Activated T-helper 2 cell treated with anti-CD3 and anti-CD28 coated beads, Interferon-gamma antibody, Interleukin-2, Interleukin-4, amounts not matched to agents 10 μg/mL and 5 μg/mL and 100 μg/mL, durations not matched to agents 14 hours and 24 hours and 36 hours (primary cell): ENCODE measurements at regions of chr1 and their contacts with region 1.

Region 1: GRCh38 chr1:40691538-40692428 is at the start of gene NFYC:
- DNase-seq: peak; percentile 96
- H3K4me3 Mint-ChIP-seq: peak within 1 kb of the TSS; percentile 89
- H3K27ac Mint-ChIP-seq: peak within 1 kb of the TSS; percentile 97
- H3K4me1 Mint-ChIP-seq: peaks cover 54% of the 10 kb centered on the region
- H3K27me3 Mint-ChIP-seq: no peaks in the 10 kb centered on the region
- total RNA-seq, gene NFYC: 66.0 and 68.4 TPM in 2 replicates

Region 2: GRCh38 chr1:40241362-40241761 is 450.4 kb before region 1 on chr1:
- intact Hi-C with region 1: loop called (anchors 10 kb)
- DNase-seq: no peak
- H3K4me3 Mint-ChIP-seq: peak overlapping the region; percentile 59
- H3K27ac Mint-ChIP-seq: peak overlapping the region; percentile 83
- H3K4me1 Mint-ChIP-seq: peaks cover 59% of the 10 kb centered on the region
- H3K27me3 Mint-ChIP-seq: no peaks in the 10 kb centered on the region

Region 3: DNA sequence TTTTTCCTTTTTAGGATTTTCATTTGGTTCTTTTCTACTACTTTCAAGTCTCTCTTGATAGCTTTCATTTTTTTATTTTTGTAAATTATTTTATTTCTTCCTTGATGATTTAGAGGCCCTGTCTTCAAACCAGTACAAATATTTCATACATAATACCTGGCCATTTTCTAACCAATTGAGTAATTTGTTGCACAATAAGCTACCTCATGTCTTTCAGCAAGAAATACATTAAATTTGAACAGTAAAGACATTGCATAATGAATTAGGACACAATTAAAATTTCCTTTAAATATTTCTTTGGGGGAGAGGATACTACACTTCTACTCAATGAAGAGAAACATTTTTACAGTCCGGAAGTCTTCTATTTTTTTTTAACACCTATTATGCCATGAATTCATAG is 359.1 kb before region 1 on chr1:
- intact Hi-C with region 1: no loop called
- DNase-seq: no peak
- H3K4me3 Mint-ChIP-seq: no peak overlapping the region
- H3K27ac Mint-ChIP-seq: no peak overlapping the region
- H3K4me1 Mint-ChIP-seq: no peaks in the 10 kb centered on the region
- H3K27me3 Mint-ChIP-seq: peaks cover 7% of the 10 kb centered on the region

Region 4: GRCh38 chr1:40449684-40450494 is 241.9 kb before region 1 on chr1 and contains the start of gene ZFP69B:
- intact Hi-C with region 1: loop called (anchors 1 kb)
- DNase-seq: peak; percentile 86
- H3K4me3 Mint-ChIP-seq: peak within 1 kb of the TSS; percentile 82
- H3K27ac Mint-ChIP-seq: peak within 1 kb of the TSS; percentile 86
- H3K4me1 Mint-ChIP-seq: peaks cover 28% of the 10 kb centered on the region
- H3K27me3 Mint-ChIP-seq: no peaks in the 10 kb centered on the region
- total RNA-seq, gene ZFP69B: 4.7 and 5.4 TPM in 2 replicates

Region 5: GRCh38 chr1:40709100-40709801 is 17.5 kb after region 1 on chr1:
- intact Hi-C with region 1: loop called (anchors 1 kb)
- DNase-seq: peak; percentile 75
- H3K4me3 Mint-ChIP-seq: peak overlapping the region; percentile 89
- H3K27ac Mint-ChIP-seq: peak overlapping the region; percentile 93
- H3K4me1 Mint-ChIP-seq: peaks cover 54% of the 10 kb centered on the region
- H3K27me3 Mint-ChIP-seq: no peaks in the 10 kb centered on the region

Region 6: GRCh38 chr1:40763742-40764532 is 72.2 kb after region 1 on chr1:
- intact Hi-C with region 1: loop called (anchors 2 kb)
- DNase-seq: no peak
- H3K4me3 Mint-ChIP-seq: peak overlapping the region; percentile 56
- H3K27ac Mint-ChIP-seq: peak overlapping the region; percentile 95
- H3K4me1 Mint-ChIP-seq: peaks cover 39% of the 10 kb centered on the region
- H3K27me3 Mint-ChIP-seq: no peaks in the 10 kb centered on the region

Region 7: GRCh38 chr1:40979233-40980067 is 287.7 kb after region 1 on chr1 and contains the start of gene CTPS1:
- intact Hi-C with region 1: loop called (anchors 5 kb)
- DNase-seq: peak; percentile 91
- H3K4me3 Mint-ChIP-seq: peak within 1 kb of the TSS; percentile 98
- H3K27ac Mint-ChIP-seq: peak within 1 kb of the TSS; percentile 97
- H3K4me1 Mint-ChIP-seq: peaks cover 56% of the 10 kb centered on the region
- H3K27me3 Mint-ChIP-seq: no peaks in the 10 kb centered on the region
- total RNA-seq, gene CTPS1: 124 and 127 TPM in 2 replicates